ENCODE measurements at regions of chr4 and their contacts with region 1.

Region 1: GRCh38 chr4:147780137-147780777 is 48.4 kb downstream of the ARHGAP10 start:
- DNase-seq: peak; percentile 86
- ATAC-seq: peak; percentile 84
- H3K4me3 ChIP-seq: peak overlapping the region; percentile 67; the same call in 1 of the 2 replicates
- H3K27ac ChIP-seq: peak overlapping the region; percentile 98
- H3K4me1 ChIP-seq: peaks cover 44% of the 10 kb centered on the region
- H3K27me3 ChIP-seq: no peaks in the 10 kb centered on the region
- CTCF ChIP-seq: no peak
- EP300 ChIP-seq: peak; percentile 8 to 61; a peak in 1 of 4 replicates
- POLR2A ChIP-seq: peak; percentile 71
- RAD21 ChIP-seq: no peak

Region 2: GRCh38 chr4:147691820-147692219 is 88.4 kb before region 1 on chr4:
- CTCF ChIA-PET with region 1: no interaction called
- POLR2A ChIA-PET with region 1: no interaction called
- RAD21 ChIA-PET with region 1: no interaction called
- SMC1A ChIA-PET with region 1: no interaction called
- in situ Hi-C with region 1: no loop called
- intact Hi-C with region 1: no loop called
- DNase-seq: no peak
- ATAC-seq: no peak
- H3K4me3 ChIP-seq: no peak overlapping the region
- H3K27ac ChIP-seq: no peak overlapping the region
- H3K4me1 ChIP-seq: no peaks in the 10 kb centered on the region
- H3K27me3 ChIP-seq: peaks cover 0 to 2% of the 10 kb centered on the region in 2 experiments; a peak in 1 of 4 replicates
- CTCF ChIP-seq: no peak
- EP300 ChIP-seq: no peak
- POLR2A ChIP-seq: no peak
- RAD21 ChIP-seq: no peak

Region 3: GRCh38 chr4:147749811-147750321 is 30.4 kb before region 1 on chr4:
- CTCF ChIA-PET with region 1: no interaction called
- POLR2A ChIA-PET with region 1: no interaction called
- RAD21 ChIA-PET with region 1: interaction called, 3 read pairs
- SMC1A ChIA-PET with region 1: interaction called, 9 read pairs
- in situ Hi-C with region 1: no loop called
- intact Hi-C with region 1: loop called (anchors 1 kb)
- DNase-seq: peak; percentile 73
- ATAC-seq: peak; percentile 97
- H3K4me3 ChIP-seq: peak overlapping the region; percentile 39; the same call in 1 of the 2 replicates
- H3K27ac ChIP-seq: peak overlapping the region; percentile 52
- H3K4me1 ChIP-seq: peaks cover 17% of the 10 kb centered on the region
- H3K27me3 ChIP-seq: no peaks in the 10 kb centered on the region
- CTCF ChIP-seq: no peak
- EP300 ChIP-seq: peak; percentile 29 to 73; a peak in 2 of 4 replicates
- POLR2A ChIP-seq: no peak
- RAD21 ChIP-seq: no peak

Region 4: DNA sequence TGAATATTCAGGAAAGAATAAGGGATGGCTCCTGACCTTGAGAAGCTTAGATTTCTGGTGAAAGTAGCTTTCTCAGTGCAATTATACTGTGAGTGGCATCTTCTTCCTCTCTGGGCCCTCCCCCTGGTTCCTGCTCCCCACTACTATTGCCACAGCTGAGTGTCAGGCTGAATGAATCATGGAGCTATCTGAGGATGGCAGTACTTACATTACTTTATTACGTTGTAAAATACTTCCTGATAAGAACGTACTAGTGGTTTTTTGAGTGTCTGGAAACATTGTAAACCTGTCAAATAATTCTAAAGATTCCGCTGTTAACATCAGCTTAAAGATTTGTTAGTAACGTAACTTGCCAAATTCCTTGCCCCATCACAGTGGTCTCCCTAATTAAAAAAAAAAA is 12.1 kb before region 1 on chr4:
- CTCF ChIA-PET with region 1: interaction called, 5 read pairs
- POLR2A ChIA-PET with region 1: interaction called, 3 read pairs
- RAD21 ChIA-PET with region 1: interaction called, 5 read pairs
- SMC1A ChIA-PET with region 1: interaction called, 13 read pairs
- in situ Hi-C with region 1: no loop called
- intact Hi-C with region 1: no loop called
- DNase-seq: no peak
- ATAC-seq: peak; percentile 48; the same call in 2 of the 3 replicates
- H3K4me3 ChIP-seq: no peak overlapping the region
- H3K27ac ChIP-seq: no peak overlapping the region
- H3K4me1 ChIP-seq: peaks cover 11% of the 10 kb centered on the region
- H3K27me3 ChIP-seq: no peaks in the 10 kb centered on the region
- CTCF ChIP-seq: no peak
- EP300 ChIP-seq: no peak
- POLR2A ChIP-seq: no peak
- RAD21 ChIP-seq: no peak

Region 5: GRCh38 chr4:147793569-147794313 is 13.5 kb after region 1 on chr4:
- CTCF ChIA-PET with region 1: interaction called, 27 read pairs
- POLR2A ChIA-PET with region 1: interaction called, 46 read pairs
- RAD21 ChIA-PET with region 1: interaction called, 37 read pairs
- SMC1A ChIA-PET with region 1: interaction called, 64 read pairs
- in situ Hi-C with region 1: no loop called
- intact Hi-C with region 1: loop called (anchors 1 kb)
- DNase-seq: no peak
- ATAC-seq: peak; percentile 65
- H3K4me3 ChIP-seq: peak overlapping the region; percentile 4; the same call in 1 of the 2 replicates
- H3K27ac ChIP-seq: peak overlapping the region; percentile 72
- H3K4me1 ChIP-seq: peaks cover 37% of the 10 kb centered on the region
- H3K27me3 ChIP-seq: no peaks in the 10 kb centered on the region
- CTCF ChIP-seq: no peak
- EP300 ChIP-seq: no peak
- POLR2A ChIP-seq: no peak
- RAD21 ChIP-seq: no peak

Region 6: GRCh38 chr4:147799986-147800555 is 19.8 kb after region 1 on chr4:
- CTCF ChIA-PET with region 1: interaction called, 27 read pairs
- POLR2A ChIA-PET with region 1: interaction called, 46 read pairs
- RAD21 ChIA-PET with region 1: interaction called, 37 read pairs
- SMC1A ChIA-PET with region 1: interaction called, 64 read pairs
- in situ Hi-C with region 1: no loop called
- intact Hi-C with region 1: loop called (anchors 1 kb)
- DNase-seq: peak; percentile 92
- ATAC-seq: peak; percentile 95
- H3K4me3 ChIP-seq: 0 out of 2 replicates have a peak overlapping the region, but pooled peaks have one; percentile 6
- H3K27ac ChIP-seq: peak overlapping the region; percentile 60
- H3K4me1 ChIP-seq: peaks cover 22% of the 10 kb centered on the region
- H3K27me3 ChIP-seq: no peaks in the 10 kb centered on the region
- CTCF ChIP-seq: 0 out of 6 replicates have a peak, but pooled peaks of 2 of the 3 experiments have one; percentile 4 to 17
- EP300 ChIP-seq: peak; percentile 93 to 94
- POLR2A ChIP-seq: no peak
- RAD21 ChIP-seq: peak; percentile 47

Measured in GM12878 (cell line).